ENCODE measurements at regions of chr16 and their contacts with region 1.

Region 1: GRCh38 chr16:89602273-89602951 is 11.0 kb upstream of the DPEP1 start:
- DNase-seq: peak; percentile 84
- H3K4me3 Mint-ChIP-seq: no peak overlapping the region
- H3K27ac Mint-ChIP-seq: no peak overlapping the region
- H3K4me1 Mint-ChIP-seq: peaks cover 14% of the 10 kb centered on the region
- H3K27me3 Mint-ChIP-seq: no peaks in the 10 kb centered on the region
- CTCF ChIP-seq: no peak

Region 2: DNA sequence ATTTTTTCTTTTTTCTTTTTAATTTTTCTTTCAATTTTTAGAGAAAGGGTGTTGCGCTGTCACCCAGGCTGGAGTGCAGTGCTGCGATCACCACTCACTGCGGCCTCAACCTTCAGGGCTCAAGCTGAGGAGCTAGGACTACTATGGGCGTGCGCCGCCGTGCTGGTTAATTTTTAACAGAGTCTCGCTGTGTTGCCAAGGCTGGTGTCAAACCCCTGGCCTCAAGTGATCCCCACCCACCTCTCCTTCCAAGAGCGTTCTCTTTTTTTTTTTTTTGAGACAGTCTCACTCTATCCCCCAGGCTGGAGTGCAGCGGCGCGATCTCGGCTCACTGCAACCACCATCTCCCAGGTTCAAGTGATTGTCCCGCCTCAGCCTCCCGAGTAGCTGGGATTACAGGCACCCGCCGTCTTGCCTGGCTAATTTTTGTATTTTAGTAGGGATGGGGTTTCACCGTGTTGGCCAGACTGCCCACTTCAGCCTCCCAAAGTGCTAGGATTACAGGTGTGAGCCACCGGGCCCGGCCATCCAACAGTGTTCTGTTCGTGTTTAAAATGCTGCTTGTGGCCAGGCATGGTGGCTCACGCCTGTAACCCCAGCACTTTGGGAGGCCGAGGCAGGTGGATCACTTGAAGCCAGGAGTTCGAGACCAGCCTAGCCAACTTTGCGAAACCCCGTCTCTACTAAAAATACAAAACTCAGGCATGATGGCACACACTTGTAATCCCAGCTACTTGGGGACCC is 56.4 kb before region 1 on chr16:
- CTCF ChIA-PET with region 1: no interaction called
- POLR2A ChIA-PET with region 1: no interaction called
- intact Hi-C with region 1: no loop called
- DNase-seq: no peak
- H3K4me3 Mint-ChIP-seq: no peak overlapping the region
- H3K27ac Mint-ChIP-seq: no peak overlapping the region
- H3K4me1 Mint-ChIP-seq: no peaks in the 10 kb centered on the region
- H3K27me3 Mint-ChIP-seq: no peaks in the 10 kb centered on the region
- CTCF ChIP-seq: no peak

Region 3: GRCh38 chr16:89615596-89616090 is 13.2 kb after region 1 on chr16:
- CTCF ChIA-PET with region 1: interaction called, 18 read pairs
- POLR2A ChIA-PET with region 1: interaction called, 3 read pairs
- intact Hi-C with region 1: no loop called
- DNase-seq: no peak
- H3K4me3 Mint-ChIP-seq: no peak overlapping the region
- H3K27ac Mint-ChIP-seq: no peak overlapping the region
- H3K4me1 Mint-ChIP-seq: peaks cover 7% of the 10 kb centered on the region
- H3K27me3 Mint-ChIP-seq: no peaks in the 10 kb centered on the region
- CTCF ChIP-seq: peak; percentile 51

Region 4: GRCh38 chr16:89633064-89633631 is 30.7 kb after region 1 on chr16:
- CTCF ChIA-PET with region 1: interaction called, 6 read pairs
- POLR2A ChIA-PET with region 1: interaction called, 8 read pairs
- intact Hi-C with region 1: loop called (anchors 2 kb)
- DNase-seq: peak; percentile 59
- H3K4me3 Mint-ChIP-seq: no peak overlapping the region
- H3K27ac Mint-ChIP-seq: no peak overlapping the region
- H3K4me1 Mint-ChIP-seq: peaks cover 6% of the 10 kb centered on the region
- H3K27me3 Mint-ChIP-seq: no peaks in the 10 kb centered on the region
- CTCF ChIP-seq: no peak

Region 5: GRCh38 chr16:89641458-89642119 is 39.2 kb after region 1 on chr16:
- CTCF ChIA-PET with region 1: interaction called, 4 read pairs
- POLR2A ChIA-PET with region 1: interaction called, 5 read pairs
- intact Hi-C with region 1: loop called (anchors 1 kb)
- DNase-seq: no peak
- H3K4me3 Mint-ChIP-seq: no peak overlapping the region
- H3K27ac Mint-ChIP-seq: no peak overlapping the region
- H3K4me1 Mint-ChIP-seq: peaks cover 8% of the 10 kb centered on the region
- H3K27me3 Mint-ChIP-seq: no peaks in the 10 kb centered on the region
- CTCF ChIP-seq: no peak

Region 6: GRCh38 chr16:89729863-89730593 is 127.6 kb after region 1 on chr16:
- CTCF ChIA-PET with region 1: no interaction called
- POLR2A ChIA-PET with region 1: no interaction called
- intact Hi-C with region 1: no loop called
- DNase-seq: no peak
- H3K4me3 Mint-ChIP-seq: no peak overlapping the region
- H3K27ac Mint-ChIP-seq: peak overlapping the region; percentile 19
- H3K4me1 Mint-ChIP-seq: no peaks in the 10 kb centered on the region
- H3K27me3 Mint-ChIP-seq: no peaks in the 10 kb centered on the region
- CTCF ChIP-seq: no peak